Activated T-helper 1 cell treated with anti-CD3 and anti-CD28 coated beads, Interleukin-12 subunit alpha, Interleukin-12 subunit beta, Interleukin-2, Interleukin-4 antibody, amounts not matched to agents 30 ng/mL and 10 ng/mL and 1 ng/mL, durations not matched to agents 14 hours and 24 hours and 36 hours (primary cell): ENCODE measurements at regions of chr12 and their contacts with region 1.

Region 1: DNA sequence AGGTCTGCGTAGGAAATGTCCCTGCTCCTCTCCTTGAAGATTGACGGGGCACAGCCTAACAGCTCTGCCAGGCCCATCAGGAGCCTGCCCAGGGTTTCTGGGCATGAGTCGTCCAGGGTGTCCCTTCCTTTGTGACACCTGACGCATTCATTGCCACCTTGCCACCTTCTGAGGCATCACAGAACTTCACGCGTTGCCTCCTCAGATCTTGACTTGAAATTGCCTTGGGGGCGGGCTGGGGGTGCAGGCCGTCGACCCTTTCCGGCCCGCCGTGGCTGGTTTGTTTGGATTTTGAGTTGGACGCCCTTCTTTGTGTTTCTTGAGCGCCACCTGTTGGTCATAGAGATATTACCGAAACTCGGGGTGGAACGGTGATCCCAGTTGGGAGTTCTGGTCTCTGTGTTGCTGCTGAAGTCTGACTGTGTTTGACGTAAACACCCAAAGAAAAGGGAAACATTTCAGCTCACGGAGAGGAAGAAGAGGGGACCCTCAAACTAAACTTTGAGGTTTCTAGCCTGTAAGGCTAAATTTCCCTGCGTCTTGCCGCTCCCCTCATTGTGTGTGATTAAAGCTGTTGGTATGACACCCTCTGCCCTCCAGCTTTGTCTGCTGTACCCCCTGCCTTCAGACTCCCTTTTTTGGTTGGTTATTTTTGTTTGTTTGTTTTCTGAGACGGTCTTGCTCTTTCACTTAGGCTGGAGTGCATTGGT is 44.6 kb downstream of the MLXIP start:
- DNase-seq: peak; percentile 61
- H3K4me3 Mint-ChIP-seq: no peak overlapping the region
- H3K27ac Mint-ChIP-seq: peak overlapping the region; percentile 21
- H3K4me1 Mint-ChIP-seq: peaks cover 22% of the 10 kb centered on the region
- H3K27me3 Mint-ChIP-seq: no peaks in the 10 kb centered on the region

Region 2: DNA sequence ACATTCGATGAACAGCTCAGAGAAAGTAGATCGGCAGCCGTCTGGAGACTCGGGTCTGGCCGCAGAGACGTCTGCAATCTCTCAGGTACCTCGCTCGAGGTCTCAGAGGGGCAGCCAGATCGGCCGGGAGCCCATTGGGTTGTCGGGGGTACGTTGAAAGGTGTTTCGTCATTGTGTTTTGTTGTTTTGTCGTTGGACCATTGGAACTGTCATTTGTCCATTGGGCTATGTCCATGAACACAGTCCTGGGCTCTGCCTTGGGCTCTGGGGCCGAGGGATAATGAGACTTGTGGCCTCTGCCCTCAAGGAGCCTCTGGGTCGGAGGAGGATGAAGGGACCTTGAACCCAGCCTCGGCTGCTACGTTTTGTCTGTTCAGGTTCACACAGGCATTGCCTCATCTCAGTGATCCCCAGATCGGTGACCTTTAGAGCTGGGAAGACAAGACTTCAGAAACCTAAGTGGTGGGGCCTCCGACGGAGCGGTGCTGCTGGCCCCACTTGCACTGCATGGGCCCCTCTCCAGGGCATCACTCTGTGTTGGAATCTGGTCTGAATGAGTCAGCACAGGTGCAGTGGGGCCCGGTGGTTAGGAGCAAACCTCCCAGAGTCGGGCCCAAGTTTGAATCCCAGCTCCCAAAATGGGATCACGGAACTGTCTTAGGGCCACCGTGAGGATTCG is 68.2 kb before region 1 on chr12:
- intact Hi-C with region 1: loop called (anchors 1 kb)
- DNase-seq: no peak
- H3K4me3 Mint-ChIP-seq: no peak overlapping the region
- H3K27ac Mint-ChIP-seq: no peak overlapping the region
- H3K4me1 Mint-ChIP-seq: no peaks in the 10 kb centered on the region
- H3K27me3 Mint-ChIP-seq: no peaks in the 10 kb centered on the region

Region 3: GRCh38 chr12:122111089-122111641 is 12.0 kb before region 1 on chr12:
- intact Hi-C with region 1: no loop called
- DNase-seq: no peak
- H3K4me3 Mint-ChIP-seq: no peak overlapping the region
- H3K27ac Mint-ChIP-seq: no peak overlapping the region
- H3K4me1 Mint-ChIP-seq: peaks cover 36% of the 10 kb centered on the region
- H3K27me3 Mint-ChIP-seq: no peaks in the 10 kb centered on the region